Esophagus muscularis mucosa (tissue), 4 donors: ENCODE measurements at regions of chr7 and their contacts with region 1.

Region 1: DNA sequence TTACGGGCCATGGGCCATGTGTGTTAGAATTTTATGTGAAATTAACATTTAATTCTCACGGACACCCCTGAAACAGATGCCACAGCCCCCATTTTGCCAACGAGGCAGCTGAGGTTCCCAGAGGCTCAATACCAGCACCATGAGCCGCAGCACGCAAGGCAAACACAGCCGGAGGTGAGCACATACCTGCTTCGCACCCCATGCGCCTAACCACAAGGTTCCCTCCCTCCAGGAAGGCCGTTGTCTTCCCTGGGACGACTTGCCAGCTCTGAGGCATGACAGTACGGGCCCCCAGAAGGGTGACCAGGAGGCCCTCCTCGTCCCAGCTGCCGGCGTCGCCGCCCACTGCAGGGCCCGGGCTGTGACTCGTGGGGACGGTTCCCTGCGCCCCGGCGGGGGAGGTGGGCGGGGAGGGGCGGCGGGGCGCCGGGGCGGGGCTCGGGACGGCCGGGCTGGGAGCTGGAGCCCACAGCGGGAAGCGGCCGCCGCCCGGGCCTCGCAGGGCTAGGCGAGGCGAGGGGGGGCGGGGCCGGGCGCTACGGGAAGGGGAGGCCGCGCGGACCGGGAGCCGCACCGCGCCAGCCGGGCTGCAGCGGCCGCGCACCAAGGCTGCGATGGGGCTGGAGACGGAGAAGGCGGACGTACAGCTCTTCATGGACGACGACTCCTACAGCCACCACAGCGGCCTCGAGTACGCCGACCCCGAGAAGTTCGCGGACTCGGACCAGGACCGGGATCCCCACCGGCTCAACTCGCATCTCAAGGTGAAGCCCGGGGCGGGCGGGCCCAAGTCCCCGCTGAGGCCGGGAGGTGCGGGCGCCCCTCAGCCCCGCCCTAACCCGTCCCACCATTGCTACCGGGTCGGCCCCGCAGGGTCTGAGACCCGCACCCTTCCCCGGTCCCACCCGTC is at the start of gene CAV2:
- DNase-seq: no peak
- H3K4me3 ChIP-seq: peak within 1 kb of the TSS; percentile 66 to 91 (median 88)
- H3K27ac ChIP-seq: peak within 1 kb of the TSS; percentile 94 to 99 (median 98)
- H3K4me1 ChIP-seq: peaks cover 26 to 67% (median 48%) of the 10 kb centered on the region in 4 donors
- H3K27me3 ChIP-seq: no peaks in the 10 kb centered on the region
- CTCF ChIP-seq: no peak
- EP300 ChIP-seq: no peak
- POLR2A ChIP-seq: no peak
- total RNA-seq, gene CAV2: 125 to 148 (median 129) TPM

Region 2: DNA sequence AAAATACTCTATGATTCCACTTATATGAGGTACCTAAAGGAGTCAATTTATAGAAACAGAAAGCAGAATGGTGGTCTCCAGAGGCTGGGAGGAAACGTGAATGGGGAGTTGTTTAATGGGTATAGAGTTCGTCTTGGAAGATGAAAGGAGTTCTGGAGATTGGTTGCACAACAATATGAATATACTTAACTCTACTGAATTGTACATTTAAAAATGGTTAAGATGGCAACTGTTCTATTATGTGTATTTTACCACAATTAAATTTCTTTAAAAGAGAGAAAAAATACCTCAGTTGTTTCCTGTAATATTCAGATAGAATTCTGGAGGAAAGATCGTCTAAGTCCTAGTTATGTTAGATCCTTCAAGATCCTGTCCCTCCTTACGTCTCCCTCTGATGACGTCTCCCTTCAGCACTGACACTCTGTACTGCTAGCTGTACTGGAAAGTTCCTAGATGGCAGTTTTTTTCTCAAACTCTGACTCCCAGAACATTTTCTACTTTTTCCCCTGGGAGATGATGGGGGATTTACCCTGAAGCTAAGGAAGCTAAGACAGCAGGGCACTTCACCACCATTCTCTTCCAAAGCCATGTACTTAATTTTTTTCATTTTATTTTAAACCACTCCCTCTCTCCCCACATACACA is 53.1 kb before region 1 on chr7:
- intact Hi-C with region 1: loop called (anchors 5 kb)
- DNase-seq: no peak
- H3K4me3 ChIP-seq: no peak overlapping the region
- H3K27ac ChIP-seq: peak overlapping the region; percentile 0 to 75 (median 57)
- H3K4me1 ChIP-seq: peaks cover 18 to 69% (median 50%) of the 10 kb centered on the region in 4 donors
- H3K27me3 ChIP-seq: no peaks in the 10 kb centered on the region
- CTCF ChIP-seq: no peak
- EP300 ChIP-seq: no peak
- POLR2A ChIP-seq: no peak